MCF 10A (cell line): ENCODE measurements at regions of chr12 and their contacts with region 1.

Region 1: GRCh38 chr12:4107436-4107878 is 166.1 kb upstream of the CCND2 start:
- DNase-seq: peak; percentile 75
- H3K4me3 Mint-ChIP-seq: no peak overlapping the region
- H3K27ac Mint-ChIP-seq: no peak overlapping the region
- H3K4me1 Mint-ChIP-seq: peaks cover 6% of the 10 kb centered on the region
- H3K27me3 Mint-ChIP-seq: peaks cover 33% of the 10 kb centered on the region
- CTCF ChIP-seq: peak; percentile 55

Region 2: GRCh38 chr12:4080213-4080612 is 27.2 kb before region 1 on chr12:
- CTCF ChIA-PET with region 1: no interaction called
- POLR2A ChIA-PET with region 1: no interaction called
- intact Hi-C with region 1: no loop called
- DNase-seq: no peak
- H3K4me3 Mint-ChIP-seq: no peak overlapping the region
- H3K27ac Mint-ChIP-seq: no peak overlapping the region
- H3K4me1 Mint-ChIP-seq: no peaks in the 10 kb centered on the region
- H3K27me3 Mint-ChIP-seq: peaks cover 67% of the 10 kb centered on the region
- CTCF ChIP-seq: no peak

Region 3: DNA sequence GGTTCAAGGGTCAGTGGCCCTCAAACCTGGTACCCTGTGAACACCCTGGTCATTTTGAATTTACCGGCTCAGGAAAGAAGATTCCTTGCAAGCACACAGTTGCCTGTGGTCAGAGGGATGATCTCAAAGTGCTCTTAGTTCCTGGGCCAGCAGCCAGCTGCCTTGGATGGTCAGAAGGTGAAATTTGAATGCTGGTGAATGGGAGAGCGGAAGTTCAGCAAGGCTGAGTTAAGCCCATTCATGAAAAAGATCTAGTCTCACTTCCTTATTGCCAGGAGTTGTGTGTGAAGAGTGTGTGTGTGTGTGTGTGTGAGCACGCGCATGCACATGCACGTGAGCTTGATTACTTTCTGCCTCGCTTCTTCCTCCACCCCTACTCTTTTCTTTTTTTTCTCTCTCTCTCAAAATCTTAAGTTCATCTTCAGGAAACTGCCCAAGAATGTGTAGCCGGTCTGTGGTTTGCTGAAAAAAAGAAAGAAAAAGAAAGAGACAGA is 10.6 kb after region 1 on chr12:
- CTCF ChIA-PET with region 1: interaction called, 21 read pairs
- POLR2A ChIA-PET with region 1: no interaction called
- intact Hi-C with region 1: no loop called
- DNase-seq: no peak
- H3K4me3 Mint-ChIP-seq: no peak overlapping the region
- H3K27ac Mint-ChIP-seq: no peak overlapping the region
- H3K4me1 Mint-ChIP-seq: peaks cover 18% of the 10 kb centered on the region
- H3K27me3 Mint-ChIP-seq: peaks cover 19% of the 10 kb centered on the region
- CTCF ChIP-seq: no peak

Region 4: DNA sequence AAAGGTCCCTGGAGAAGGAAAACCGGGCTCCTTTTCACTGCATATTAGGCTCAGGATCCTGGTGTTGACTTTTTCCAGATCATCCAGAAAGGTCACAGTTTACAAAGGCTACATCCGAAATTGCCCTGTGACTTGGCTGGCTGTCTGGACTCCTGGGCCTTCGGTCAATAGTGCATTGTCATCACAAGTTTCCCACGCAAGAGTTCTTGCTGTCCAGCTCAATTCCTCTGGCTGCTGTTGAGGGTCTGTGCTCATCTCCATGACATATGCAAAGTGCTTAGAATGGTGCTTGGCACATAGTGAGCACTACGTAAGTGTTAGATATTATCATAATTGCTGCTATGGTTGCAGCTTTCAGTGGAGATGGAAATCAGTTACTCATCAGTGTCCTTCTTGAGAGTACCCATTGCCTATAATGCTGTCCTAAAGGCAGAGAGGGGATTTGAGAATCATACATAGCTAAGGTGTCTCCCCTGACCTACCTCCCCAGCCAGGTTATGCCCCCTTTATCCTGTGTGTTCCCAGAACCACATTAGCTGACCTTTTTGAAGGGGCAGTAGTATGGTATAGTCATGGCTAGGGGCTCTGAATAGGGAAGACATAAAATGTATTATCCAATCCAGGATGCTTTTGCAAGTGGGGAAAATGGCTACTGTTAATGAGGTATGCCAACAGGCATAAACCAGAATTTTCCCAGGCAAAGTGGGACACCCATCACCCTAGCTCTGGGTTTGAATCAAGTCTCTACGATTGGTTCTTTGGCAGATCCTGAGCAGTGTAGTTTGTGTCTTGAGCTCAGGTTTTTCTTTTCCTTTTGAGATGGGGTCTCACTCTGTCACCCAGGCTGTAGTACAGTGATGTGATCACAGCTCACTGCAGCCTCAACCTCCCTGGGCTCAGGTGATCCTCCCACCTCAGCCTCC is 34.2 kb after region 1 on chr12:
- CTCF ChIA-PET with region 1: interaction called, 10 read pairs
- POLR2A ChIA-PET with region 1: no interaction called
- intact Hi-C with region 1: no loop called
- DNase-seq: no peak
- H3K4me3 Mint-ChIP-seq: peak overlapping the region; percentile 83
- H3K27ac Mint-ChIP-seq: no peak overlapping the region
- H3K4me1 Mint-ChIP-seq: peaks cover 5% of the 10 kb centered on the region
- H3K27me3 Mint-ChIP-seq: no peaks in the 10 kb centered on the region
- CTCF ChIP-seq: no peak